CD8-positive, alpha-beta T cell (primary cell): ENCODE measurements at regions of chr4 and their contacts with region 1.

Region 1: DNA sequence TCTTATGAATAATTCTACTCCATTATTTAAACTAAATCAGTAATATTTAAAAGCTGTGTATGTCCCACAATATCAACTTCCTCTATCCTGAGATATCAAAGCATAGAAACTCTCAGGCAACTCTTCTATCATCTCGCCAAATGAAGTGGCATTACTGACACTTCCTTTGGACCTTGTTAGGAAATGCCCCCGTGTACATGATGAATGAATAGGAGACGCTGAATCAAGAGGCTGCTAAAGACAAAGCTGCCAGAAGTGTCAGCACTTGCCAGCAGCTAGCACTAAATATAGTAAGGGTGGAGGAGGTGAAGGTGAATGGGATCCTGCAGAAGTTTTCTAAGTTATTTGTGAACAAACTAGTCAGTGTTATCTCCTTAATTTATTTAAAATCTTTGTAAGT is 99.5 kb upstream of the BLTP1 start:
- DNase-seq: no peak
- ATAC-seq: no peak
- H3K4me3 ChIP-seq: no peak overlapping the region
- H3K4me3 Mint-ChIP-seq: no peak overlapping the region
- H3K27ac ChIP-seq: no peak overlapping the region
- H3K27ac Mint-ChIP-seq: no peak overlapping the region
- H3K4me1 ChIP-seq: no peaks in the 10 kb centered on the region
- H3K4me1 Mint-ChIP-seq: no peaks in the 10 kb centered on the region
- H3K27me3 ChIP-seq: no peaks in the 10 kb centered on the region
- H3K27me3 Mint-ChIP-seq: peaks cover 2% of the 10 kb centered on the region
- CTCF ChIP-seq: no peak

Region 2: GRCh38 chr4:121706595-121707021 is 346.1 kb before region 1 on chr4:
- CTCF ChIA-PET with region 1: no interaction called
- POLR2A ChIA-PET with region 1: no interaction called
- intact Hi-C with region 1: no loop called
- DNase-seq: peak; percentile 8 to 88 (median 45)
- ATAC-seq: peak; percentile 93
- H3K4me3 ChIP-seq: peak overlapping the region in 1 of 2 experiments; percentile 5
- H3K4me3 Mint-ChIP-seq: peak overlapping the region; percentile 24
- H3K27ac ChIP-seq: peak overlapping the region in 1 of 2 experiments; percentile 8
- H3K27ac Mint-ChIP-seq: peak overlapping the region; percentile 6
- H3K4me1 ChIP-seq: no peaks in the 10 kb centered on the region
- H3K4me1 Mint-ChIP-seq: peaks cover 13% of the 10 kb centered on the region
- H3K27me3 ChIP-seq: peaks cover 0 to 14% of the 10 kb centered on the region in 2 experiments
- H3K27me3 Mint-ChIP-seq: peaks cover 27% of the 10 kb centered on the region
- CTCF ChIP-seq: no peak

Region 3: GRCh38 chr4:121900132-121900983 is 152.3 kb before region 1 on chr4:
- CTCF ChIA-PET with region 1: no interaction called
- POLR2A ChIA-PET with region 1: no interaction called
- intact Hi-C with region 1: no loop called
- DNase-seq: peak in 8 of 9 experiments; percentile 9 to 77 (median 50)
- ATAC-seq: peak; percentile 80
- H3K4me3 ChIP-seq: no peak overlapping the region
- H3K4me3 Mint-ChIP-seq: no peak overlapping the region
- H3K27ac ChIP-seq: no peak overlapping the region
- H3K27ac Mint-ChIP-seq: no peak overlapping the region
- H3K4me1 ChIP-seq: peaks cover 4% of the 10 kb centered on the region
- H3K4me1 Mint-ChIP-seq: peaks cover 10% of the 10 kb centered on the region
- H3K27me3 ChIP-seq: no peaks in the 10 kb centered on the region
- H3K27me3 Mint-ChIP-seq: peaks cover 10% of the 10 kb centered on the region
- CTCF ChIP-seq: peak; percentile 72

Region 4: GRCh38 chr4:122814426-122814825 is 761.7 kb after region 1 on chr4:
- CTCF ChIA-PET with region 1: no interaction called
- POLR2A ChIA-PET with region 1: no interaction called
- intact Hi-C with region 1: loop called in 1 of 2 experiments (anchors 10 kb)
- DNase-seq: no peak
- ATAC-seq: no peak
- H3K4me3 ChIP-seq: no peak overlapping the region
- H3K4me3 Mint-ChIP-seq: no peak overlapping the region
- H3K27ac ChIP-seq: no peak overlapping the region
- H3K27ac Mint-ChIP-seq: no peak overlapping the region
- H3K4me1 ChIP-seq: no peaks in the 10 kb centered on the region
- H3K4me1 Mint-ChIP-seq: no peaks in the 10 kb centered on the region
- H3K27me3 ChIP-seq: no peaks in the 10 kb centered on the region
- H3K27me3 Mint-ChIP-seq: peaks cover 4% of the 10 kb centered on the region
- CTCF ChIP-seq: no peak